ENCODE measurements at regions of chr12 and their contacts with region 1.

Region 1: DNA sequence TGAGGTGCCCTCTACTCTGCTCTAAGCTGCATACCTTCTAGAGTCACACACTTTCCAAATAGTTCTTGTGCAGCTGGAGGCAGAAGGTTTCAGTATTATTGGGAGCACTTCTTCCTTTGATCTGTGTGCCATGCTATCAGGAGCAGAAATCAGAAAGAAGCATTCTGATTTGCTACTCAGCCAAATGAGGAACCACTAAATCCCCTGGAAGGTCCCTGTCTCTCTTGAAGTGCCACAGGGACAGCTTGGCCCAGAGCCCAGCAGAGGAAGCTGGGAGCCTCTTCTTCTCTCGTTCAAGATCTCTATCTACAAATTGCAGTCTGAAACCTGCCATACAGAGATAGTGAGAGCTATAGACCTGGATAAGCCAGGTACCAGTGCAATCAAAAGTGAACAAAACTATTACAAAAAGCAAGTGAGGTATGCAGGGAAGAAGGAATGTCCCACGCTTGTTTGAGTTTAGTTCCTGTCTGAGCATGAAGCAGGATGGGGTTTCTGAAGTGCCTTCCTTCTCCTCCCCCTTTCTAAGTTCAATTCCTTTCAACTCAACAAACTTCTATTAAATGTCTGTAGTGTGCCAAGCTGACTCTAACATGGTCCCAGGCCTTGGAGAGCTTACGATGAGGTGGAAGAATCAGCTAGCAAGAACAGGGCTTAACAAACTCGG is 100.9 kb upstream of the PARP11 start:
- DNase-seq: no peak
- ATAC-seq: peak; percentile 42
- H3K4me3 Mint-ChIP-seq: peak overlapping the region; percentile 36
- H3K27ac Mint-ChIP-seq: peak overlapping the region; percentile 72
- H3K4me1 Mint-ChIP-seq: peaks cover 34% of the 10 kb centered on the region
- H3K27me3 Mint-ChIP-seq: peaks cover 4% of the 10 kb centered on the region
- CTCF ChIP-seq: no peak

Region 2: DNA sequence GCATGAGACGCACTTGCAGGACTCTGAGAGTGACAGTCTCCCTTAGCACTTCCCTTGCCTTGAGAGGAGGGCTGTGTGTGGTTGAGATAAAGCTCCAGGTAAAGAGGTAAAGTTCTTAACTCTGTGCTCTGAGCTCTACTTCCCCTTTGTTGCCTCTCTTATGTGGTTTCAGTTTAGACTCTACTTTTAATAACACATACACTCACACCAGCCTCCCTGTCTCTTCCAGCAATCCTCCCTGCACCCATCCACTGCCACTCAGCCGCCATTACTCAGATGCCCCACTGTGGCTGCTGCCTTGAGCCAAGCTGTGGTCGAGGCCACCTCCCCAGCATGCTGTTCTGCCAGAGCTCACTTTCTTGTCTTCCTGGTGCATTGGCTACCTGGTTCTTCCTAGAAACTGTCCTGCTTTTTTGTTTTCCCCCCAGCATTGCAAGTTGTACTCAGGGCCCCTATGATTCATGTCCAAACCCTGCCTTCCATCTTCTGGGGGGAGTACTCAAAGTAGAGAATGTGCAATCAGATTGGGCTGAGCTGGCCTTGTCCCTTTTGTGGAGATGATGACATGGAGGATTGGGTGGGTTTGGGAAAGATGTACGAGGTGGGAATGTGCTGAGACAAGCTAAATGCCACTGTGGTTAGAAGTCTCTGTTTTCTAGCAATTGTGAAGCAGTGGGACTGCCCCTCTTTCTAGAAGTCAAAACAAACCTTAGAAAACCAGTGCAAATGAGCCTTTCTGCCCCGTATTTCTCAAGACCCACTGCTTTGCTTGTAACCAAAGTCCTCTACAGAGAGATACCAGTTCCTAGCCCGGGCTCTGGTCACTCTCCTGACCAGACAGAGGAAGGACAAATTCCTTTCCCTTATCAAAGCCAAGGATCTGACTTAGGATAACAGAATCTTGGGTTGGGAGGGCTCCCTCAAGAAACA is 14.7 kb after region 1 on chr12:
- CTCF ChIA-PET with region 1: interaction called, 3 read pairs
- POLR2A ChIA-PET with region 1: no interaction called
- intact Hi-C with region 1: loop called (anchors 2 kb)
- DNase-seq: no peak
- ATAC-seq: peak; percentile 77
- H3K4me3 Mint-ChIP-seq: no peak overlapping the region
- H3K27ac Mint-ChIP-seq: peak overlapping the region; percentile 54
- H3K4me1 Mint-ChIP-seq: peaks cover 15% of the 10 kb centered on the region
- H3K27me3 Mint-ChIP-seq: no peaks in the 10 kb centered on the region
- CTCF ChIP-seq: no peak

Region 3: GRCh38 chr12:4562034-4562657 is 588.0 kb after region 1 on chr12 and contains the start of gene DYRK4:
- CTCF ChIA-PET with region 1: no interaction called
- POLR2A ChIA-PET with region 1: no interaction called
- intact Hi-C with region 1: no loop called
- DNase-seq: no peak
- ATAC-seq: no peak
- H3K4me3 Mint-ChIP-seq: peak within 1 kb of the TSS; percentile 56
- H3K27ac Mint-ChIP-seq: no peak within 1 kb of the TSS
- H3K4me1 Mint-ChIP-seq: peaks cover 41% of the 10 kb centered on the region
- H3K27me3 Mint-ChIP-seq: no peaks in the 10 kb centered on the region
- CTCF ChIP-seq: no peak
- total RNA-seq, gene DYRK4: 19.0 and 22.1 TPM in 2 replicates

Measured in activated B cell treated with CpG ODN at 0.5 μM for 24 hours (primary cell).